CD8-positive, alpha-beta T cell (primary cell): ENCODE measurements at regions of chr1 and their contacts with region 1.

Region 1: GRCh38 chr1:182725259-182726255 is 41.2 kb upstream of the RGS8 start:
- DNase-seq: no peak
- ATAC-seq: no peak
- H3K4me3 ChIP-seq: no peak overlapping the region
- H3K4me3 Mint-ChIP-seq: no peak overlapping the region
- H3K27ac ChIP-seq: no peak overlapping the region
- H3K27ac Mint-ChIP-seq: no peak overlapping the region
- H3K4me1 ChIP-seq: no peaks in the 10 kb centered on the region
- H3K4me1 Mint-ChIP-seq: no peaks in the 10 kb centered on the region
- H3K27me3 ChIP-seq: no peaks in the 10 kb centered on the region
- H3K27me3 Mint-ChIP-seq: peaks cover 9% of the 10 kb centered on the region
- CTCF ChIP-seq: no peak

Region 2: DNA sequence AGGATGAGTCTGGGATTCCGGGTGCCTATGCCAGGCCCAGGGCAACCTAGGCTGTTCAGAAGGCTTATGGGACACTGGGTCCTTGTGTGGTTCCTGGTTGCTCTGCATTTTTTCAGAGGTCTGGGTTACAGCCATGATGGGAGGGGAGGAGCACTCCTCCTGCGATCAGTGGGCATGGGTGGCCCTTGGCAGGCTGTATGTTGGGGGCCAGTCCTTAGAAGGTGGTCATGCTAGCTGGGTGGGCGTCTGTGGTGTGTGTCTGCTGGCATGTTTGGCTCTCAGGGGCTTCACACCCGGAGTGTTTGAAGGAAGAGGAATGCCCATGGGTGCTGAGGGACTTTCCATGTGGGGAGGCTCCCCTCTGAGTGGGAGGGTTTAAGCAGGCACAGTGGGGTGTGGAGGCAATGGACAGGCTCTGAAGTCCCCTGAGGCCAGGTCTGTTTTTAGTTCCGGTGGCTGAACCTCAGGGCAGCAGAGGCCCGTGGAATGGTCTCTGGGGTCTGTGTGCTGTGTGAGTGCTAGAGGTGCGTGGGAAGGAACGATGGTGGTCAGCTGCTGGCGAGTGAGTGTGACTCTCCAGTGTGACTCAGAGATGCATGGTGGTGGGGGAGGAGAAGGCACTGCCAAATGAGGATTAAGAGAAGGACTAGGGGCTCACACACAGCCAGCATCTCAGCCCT is 1216.9 kb before region 1 on chr1:
- CTCF ChIA-PET with region 1: no interaction called
- POLR2A ChIA-PET with region 1: no interaction called
- intact Hi-C with region 1: loop called in 1 of 2 experiments (anchors 5 kb)
- DNase-seq: no peak
- ATAC-seq: no peak
- H3K4me3 ChIP-seq: no peak overlapping the region
- H3K4me3 Mint-ChIP-seq: no peak overlapping the region
- H3K27ac ChIP-seq: no peak overlapping the region
- H3K27ac Mint-ChIP-seq: no peak overlapping the region
- H3K4me1 ChIP-seq: no peaks in the 10 kb centered on the region
- H3K4me1 Mint-ChIP-seq: no peaks in the 10 kb centered on the region
- H3K27me3 ChIP-seq: no peaks in the 10 kb centered on the region
- H3K27me3 Mint-ChIP-seq: peaks cover 16% of the 10 kb centered on the region
- CTCF ChIP-seq: no peak

Region 3: GRCh38 chr1:182765391-182765790 is 39.8 kb after region 1 on chr1:
- CTCF ChIA-PET with region 1: no interaction called
- POLR2A ChIA-PET with region 1: no interaction called
- intact Hi-C with region 1: loop called in 1 of 2 experiments (anchors 1 kb)
- DNase-seq: no peak
- ATAC-seq: no peak
- H3K4me3 ChIP-seq: no peak overlapping the region
- H3K4me3 Mint-ChIP-seq: no peak overlapping the region
- H3K27ac ChIP-seq: no peak overlapping the region
- H3K27ac Mint-ChIP-seq: no peak overlapping the region
- H3K4me1 ChIP-seq: no peaks in the 10 kb centered on the region
- H3K4me1 Mint-ChIP-seq: no peaks in the 10 kb centered on the region
- H3K27me3 ChIP-seq: no peaks in the 10 kb centered on the region
- H3K27me3 Mint-ChIP-seq: peaks cover 14% of the 10 kb centered on the region
- CTCF ChIP-seq: no peak

Region 4: DNA sequence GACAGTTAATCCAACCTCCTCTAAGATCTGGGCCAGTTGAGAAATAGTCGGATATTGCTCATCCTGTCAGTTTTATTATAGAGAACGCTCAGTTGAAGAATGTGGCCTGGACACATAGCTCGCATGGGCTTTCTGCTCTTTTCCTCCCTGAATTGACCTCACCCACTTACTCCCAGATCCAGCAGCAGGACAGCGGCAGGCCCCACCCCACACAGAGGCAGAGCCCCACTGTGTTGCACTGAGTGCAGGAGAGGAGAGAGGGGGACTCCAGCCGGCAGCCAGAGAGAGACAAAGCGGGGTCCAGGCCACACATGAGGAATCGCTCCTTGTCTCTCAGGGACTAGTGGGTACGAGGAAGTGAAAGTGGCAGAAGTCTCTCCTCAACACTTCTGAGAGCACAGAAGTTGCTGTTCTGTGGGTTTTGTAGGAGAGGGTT is 376.3 kb after region 1 on chr1:
- CTCF ChIA-PET with region 1: no interaction called
- POLR2A ChIA-PET with region 1: no interaction called
- intact Hi-C with region 1: no loop called
- DNase-seq: no peak
- ATAC-seq: no peak
- H3K4me3 ChIP-seq: no peak overlapping the region
- H3K4me3 Mint-ChIP-seq: no peak overlapping the region
- H3K27ac ChIP-seq: no peak overlapping the region
- H3K27ac Mint-ChIP-seq: no peak overlapping the region
- H3K4me1 ChIP-seq: no peaks in the 10 kb centered on the region
- H3K4me1 Mint-ChIP-seq: no peaks in the 10 kb centered on the region
- H3K27me3 ChIP-seq: peaks cover 0 to 3% of the 10 kb centered on the region in 2 experiments
- H3K27me3 Mint-ChIP-seq: peaks cover 12% of the 10 kb centered on the region
- CTCF ChIP-seq: no peak